Activated CD4-positive, alpha-beta T cell treated with anti-CD3 and anti-CD28 coated beads for 36 hours (primary cell): ENCODE measurements at regions of chr18 and their contacts with region 1.

Region 1: DNA sequence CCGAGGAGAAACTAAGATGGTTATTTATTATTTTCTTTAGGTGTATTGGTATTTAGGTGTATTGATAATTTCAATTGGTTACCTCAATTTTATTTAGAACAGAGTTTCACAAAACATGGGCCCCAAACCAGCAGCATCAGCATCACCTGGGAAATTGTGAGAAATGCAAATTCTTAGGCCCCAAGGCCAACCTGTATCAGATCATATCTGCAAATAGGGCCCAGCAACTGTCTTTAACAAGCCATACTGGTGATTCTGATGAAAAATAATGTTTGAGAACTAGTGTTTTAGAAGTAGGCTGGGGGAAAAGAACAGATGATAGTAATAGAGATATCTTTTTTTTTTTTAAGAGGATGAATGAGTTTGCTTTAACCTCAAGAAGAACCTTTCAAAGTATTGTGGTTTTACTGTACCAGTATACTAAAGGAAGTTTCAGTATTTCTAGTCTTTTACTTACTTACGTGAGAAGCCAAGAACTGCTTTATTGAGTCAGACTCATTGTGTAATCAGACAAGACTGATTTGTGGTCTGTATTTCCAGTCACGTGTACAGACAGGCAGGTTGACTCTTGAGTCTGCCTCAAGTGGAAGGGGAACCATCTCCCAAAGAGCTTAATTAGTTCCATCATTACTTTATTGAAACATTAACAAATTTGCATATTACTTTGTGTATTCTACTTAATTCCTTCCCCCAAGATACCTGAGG is 60.4 kb upstream of the GAREM1 start:
- DNase-seq: peak; percentile 43
- ATAC-seq: peak; percentile 96
- H3K4me3 Mint-ChIP-seq: no peak overlapping the region
- H3K27ac Mint-ChIP-seq: peak overlapping the region; percentile 14
- H3K4me1 Mint-ChIP-seq: peaks cover 17% of the 10 kb centered on the region
- H3K27me3 Mint-ChIP-seq: peaks cover 15% of the 10 kb centered on the region

Region 2: DNA sequence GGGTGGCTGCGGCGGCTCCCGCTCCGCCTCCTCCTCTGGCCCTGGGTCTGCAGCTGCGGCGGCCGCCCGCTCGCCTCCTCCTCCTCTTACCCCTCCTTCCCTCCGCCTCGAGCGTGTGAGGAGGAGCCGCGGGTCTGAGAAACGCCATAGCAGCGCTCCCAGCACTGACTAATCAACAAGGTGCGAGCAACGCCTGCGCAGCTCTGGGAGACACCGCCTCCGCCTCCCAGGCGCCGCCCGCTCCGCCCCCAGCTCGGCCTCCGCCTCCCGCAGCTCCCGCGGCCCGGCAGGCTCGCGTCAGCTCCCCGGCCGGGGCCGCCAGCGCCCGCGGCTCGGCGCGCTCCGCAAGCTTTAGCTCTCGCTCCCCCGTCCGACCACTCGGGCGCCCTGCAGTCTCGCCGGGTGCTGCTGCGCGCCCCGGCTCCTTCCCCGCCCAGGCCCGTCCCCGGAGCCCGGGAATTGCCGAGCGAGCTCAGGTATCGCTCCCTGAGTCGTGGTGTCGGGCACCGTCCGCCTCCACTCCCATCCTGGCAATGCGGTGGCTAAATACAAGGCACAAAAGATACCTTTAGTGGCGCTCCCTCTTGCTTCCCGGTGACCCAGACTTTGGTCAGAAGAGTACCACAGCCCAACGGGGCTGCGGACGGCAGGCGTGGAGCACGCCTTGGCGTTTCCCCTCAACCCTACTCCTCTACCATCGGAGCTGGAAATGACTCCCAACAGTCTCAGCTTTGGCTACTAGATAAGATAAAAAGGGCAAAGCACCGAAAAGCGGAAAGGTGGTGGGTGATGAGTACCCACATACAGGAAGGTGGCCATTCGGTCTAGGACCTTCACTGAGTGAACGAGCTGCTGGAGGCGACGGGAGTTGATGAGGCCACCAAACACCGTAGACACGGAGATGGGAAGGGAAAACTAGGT is 60.1 kb before region 1 on chr18 and contains the start of gene GAREM1:
- CTCF ChIA-PET with region 1: interaction called, 5 read pairs
- POLR2A ChIA-PET with region 1: no interaction called
- intact Hi-C with region 1: loop called (anchors 1 kb)
- DNase-seq: peak; percentile 86
- ATAC-seq: peak; percentile 92
- H3K4me3 Mint-ChIP-seq: peak within 1 kb of the TSS; percentile 61
- H3K27ac Mint-ChIP-seq: no peak within 1 kb of the TSS
- H3K4me1 Mint-ChIP-seq: peaks cover 24% of the 10 kb centered on the region
- H3K27me3 Mint-ChIP-seq: peaks cover 37% of the 10 kb centered on the region
- total RNA-seq, gene GAREM1: not detected

Region 3: DNA sequence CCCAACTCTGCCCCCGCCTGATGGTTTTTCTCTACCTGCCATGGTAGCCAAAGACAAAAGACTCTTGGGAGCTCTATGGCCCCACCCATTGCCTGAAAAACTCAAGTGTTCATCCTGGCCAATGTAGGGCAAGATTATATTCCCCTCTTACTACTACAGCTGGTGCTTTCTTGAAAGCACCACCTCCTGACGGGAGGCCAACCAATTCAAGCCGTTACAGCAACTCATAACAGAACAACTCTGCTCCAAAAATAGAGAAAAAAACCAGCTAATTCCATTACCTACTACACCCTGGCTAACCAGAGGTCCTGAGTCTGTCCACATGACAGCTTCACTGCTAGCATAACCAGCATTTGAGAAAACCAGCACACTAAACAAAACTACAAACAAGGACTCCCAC is 67.0 kb after region 1 on chr18:
- CTCF ChIA-PET with region 1: no interaction called
- POLR2A ChIA-PET with region 1: no interaction called
- intact Hi-C with region 1: no loop called
- DNase-seq: no peak
- ATAC-seq: no peak
- H3K4me3 Mint-ChIP-seq: no peak overlapping the region
- H3K27ac Mint-ChIP-seq: no peak overlapping the region
- H3K4me1 Mint-ChIP-seq: no peaks in the 10 kb centered on the region
- H3K27me3 Mint-ChIP-seq: peaks cover 2% of the 10 kb centered on the region